Heart right ventricle (tissue), 16 donors: ENCODE measurements at regions of chr13 and their contacts with region 1.

Region 1: DNA sequence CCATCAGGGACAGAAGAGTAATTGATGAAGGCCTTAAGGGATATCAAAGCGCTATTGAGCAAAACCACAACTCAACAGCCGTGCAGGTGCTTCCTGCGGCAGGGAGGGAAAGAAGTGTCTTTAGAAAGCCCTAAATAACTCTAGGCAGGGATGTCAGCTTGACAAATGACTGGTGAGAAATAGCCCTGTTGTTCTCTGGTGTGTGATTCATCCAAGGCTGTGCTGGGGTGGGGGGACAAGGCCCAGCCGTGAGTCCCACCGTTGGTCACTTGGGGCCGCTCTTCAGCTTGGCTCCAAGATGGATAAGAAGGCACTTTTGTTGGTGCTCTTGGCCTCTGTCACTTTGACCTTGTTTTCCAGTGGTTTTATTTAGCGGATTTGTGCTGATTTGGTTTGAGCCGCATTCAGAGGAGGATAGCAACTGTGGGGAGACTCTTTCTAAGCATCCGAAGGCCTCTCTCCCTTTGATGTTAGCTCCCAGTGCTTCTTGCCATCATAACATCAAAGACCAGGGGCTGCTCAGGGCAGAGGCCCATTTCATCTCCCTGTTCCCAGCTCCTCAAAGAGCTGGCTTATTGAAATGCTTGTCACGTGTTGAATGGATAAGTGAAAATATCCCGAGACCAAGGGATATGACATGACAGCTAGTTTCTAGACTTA is 130.3 kb upstream of the SERP2 start:
- DNase-seq: peak in 1 of 2 donors; percentile 57
- ATAC-seq: peak; percentile 60 to 94 (median 74)
- H3K4me3 ChIP-seq: no peak overlapping the region
- H3K27ac ChIP-seq: peak overlapping the region in 8 of 10 donors; percentile 11 to 69 (median 50)
- H3K4me1 ChIP-seq: peaks cover under 1 to 22% (median 4%) of the 10 kb centered on the region in 9 donors
- H3K27me3 ChIP-seq: no peaks in the 10 kb centered on the region
- CTCF ChIP-seq: peak in 8 of 9 donors; percentile 17 to 69 (median 56)

Region 2: GRCh38 chr13:44364348-44365049 is 121.2 kb after region 1 on chr13:
- intact Hi-C with region 1: loop called in 1 of 10 experiments (anchors 10 kb)
- DNase-seq: no peak
- ATAC-seq: peak in 5 of 8 donors; percentile 34 to 52 (median 41)
- H3K4me3 ChIP-seq: no peak overlapping the region
- H3K27ac ChIP-seq: peak overlapping the region in 4 of 10 donors; percentile 16 to 58 (median 34)
- H3K4me1 ChIP-seq: peaks cover 0 to 29% (median 8%) of the 10 kb centered on the region in 9 donors
- H3K27me3 ChIP-seq: no peaks in the 10 kb centered on the region
- CTCF ChIP-seq: no peak

Region 3: DNA sequence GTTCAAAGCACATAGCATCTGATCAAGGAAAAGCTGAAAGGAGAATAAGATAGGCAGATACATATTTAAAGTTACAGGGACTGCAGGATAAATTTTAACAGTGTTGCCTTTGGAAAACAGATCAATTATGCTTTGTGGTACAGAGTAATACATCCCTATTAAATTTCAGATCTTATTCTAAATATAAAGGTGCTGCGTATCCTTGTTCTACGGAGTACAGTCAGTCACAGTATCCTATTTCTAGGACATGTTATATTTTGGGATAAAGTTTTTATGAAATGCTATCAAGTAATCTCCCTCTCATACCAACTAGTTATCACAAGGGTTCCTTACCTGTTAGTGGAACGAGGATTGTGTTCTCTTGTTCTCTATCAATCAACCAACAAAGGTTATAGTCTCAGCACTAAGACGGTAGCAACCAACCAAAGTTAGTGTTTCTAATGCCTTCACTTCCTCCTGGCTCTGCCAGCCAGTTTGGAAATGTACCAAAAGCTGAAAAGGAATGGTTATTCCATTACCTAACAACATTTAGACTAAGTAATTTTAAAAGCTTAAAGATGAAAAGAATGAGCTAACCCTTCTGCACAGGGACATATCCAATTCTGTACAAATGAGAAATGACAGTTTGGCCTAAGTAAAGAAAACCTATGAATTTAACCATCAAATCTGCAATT is 297.6 kb after region 1 on chr13:
- intact Hi-C with region 1: no loop called
- DNase-seq: no peak
- ATAC-seq: no peak
- H3K4me3 ChIP-seq: no peak overlapping the region
- H3K27ac ChIP-seq: no peak overlapping the region
- H3K4me1 ChIP-seq: peaks cover 0 to 10% (median 4%) of the 10 kb centered on the region in 9 donors
- H3K27me3 ChIP-seq: no peaks in the 10 kb centered on the region
- CTCF ChIP-seq: no peak